ENCODE measurements at regions of chr14 and their contacts with region 1.

Region 1: GRCh38 chr14:102437997-102438915 is 71.3 kb downstream of the ANKRD9 start:
- DNase-seq: peak; percentile 79 to 88 (median 82)
- H3K4me3 ChIP-seq: peak overlapping the region in 3 of 7 experiments; percentile 19 to 66 (median 52)
- H3K27ac ChIP-seq: no peak overlapping the region
- H3K4me1 ChIP-seq: peaks cover 0 to 3% (median 1%) of the 10 kb centered on the region in 4 experiments
- H3K27me3 ChIP-seq: no peaks in the 10 kb centered on the region

Region 2: DNA sequence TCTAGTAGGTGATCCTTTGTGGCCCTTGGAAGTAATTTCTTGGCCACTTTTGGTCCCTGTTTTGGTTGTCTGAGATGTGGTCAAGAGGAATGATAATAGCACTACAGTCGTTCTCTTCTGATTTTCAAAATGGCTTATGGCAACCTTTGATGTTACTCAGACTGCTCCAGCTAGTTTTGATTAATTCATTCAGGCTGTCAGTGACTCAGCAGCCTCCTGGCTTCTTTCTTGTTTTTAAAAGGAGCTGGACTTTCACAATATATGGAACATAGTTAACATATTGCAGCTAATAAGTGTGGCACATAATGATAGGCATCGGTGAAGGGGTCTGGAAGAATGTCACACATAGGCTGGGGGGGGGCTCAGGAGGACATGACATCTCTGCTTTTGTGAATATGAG is 251.2 kb before region 1 on chr14:
- CTCF ChIA-PET with region 1: no interaction called
- POLR2A ChIA-PET with region 1: no interaction called
- DNase-seq: no peak
- H3K4me3 ChIP-seq: no peak overlapping the region
- H3K27ac ChIP-seq: no peak overlapping the region
- H3K4me1 ChIP-seq: peaks cover 0 to 9% (median 0%) of the 10 kb centered on the region in 4 experiments
- H3K27me3 ChIP-seq: no peaks in the 10 kb centered on the region

Region 3: GRCh38 chr14:102394717-102395375 is 43.4 kb before region 1 on chr14:
- CTCF ChIA-PET with region 1: no interaction called
- POLR2A ChIA-PET with region 1: no interaction called
- DNase-seq: no peak
- H3K4me3 ChIP-seq: no peak overlapping the region
- H3K27ac ChIP-seq: no peak overlapping the region
- H3K4me1 ChIP-seq: no peaks in the 10 kb centered on the region
- H3K27me3 ChIP-seq: no peaks in the 10 kb centered on the region

Region 4: DNA sequence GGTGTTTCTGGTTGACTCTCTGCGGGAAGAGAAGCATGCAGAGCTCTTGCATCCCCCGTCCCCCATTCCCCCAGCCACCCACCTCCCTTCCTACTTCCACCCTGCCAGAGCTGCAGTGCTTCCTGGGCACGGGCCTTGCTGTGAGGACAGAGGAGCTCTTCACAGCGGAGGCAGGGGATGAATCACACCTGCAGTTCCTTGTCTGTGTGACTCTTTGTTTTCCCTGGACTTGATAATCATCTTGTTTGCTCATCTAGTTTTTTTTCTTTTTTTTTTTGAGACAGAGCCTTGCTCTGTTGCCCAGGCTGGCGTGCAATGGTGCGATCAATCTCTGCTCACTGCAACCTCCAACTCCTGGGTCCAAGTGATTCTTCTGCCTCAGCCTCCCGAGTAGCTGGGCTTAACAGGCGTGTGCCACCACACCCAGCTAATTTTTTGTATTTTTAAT is 43.6 kb after region 1 on chr14:
- CTCF ChIA-PET with region 1: no interaction called
- POLR2A ChIA-PET with region 1: no interaction called
- DNase-seq: no peak
- H3K4me3 ChIP-seq: no peak overlapping the region
- H3K27ac ChIP-seq: no peak overlapping the region
- H3K4me1 ChIP-seq: peaks cover 0 to 4% (median 1%) of the 10 kb centered on the region in 4 experiments
- H3K27me3 ChIP-seq: no peaks in the 10 kb centered on the region

Region 5: DNA sequence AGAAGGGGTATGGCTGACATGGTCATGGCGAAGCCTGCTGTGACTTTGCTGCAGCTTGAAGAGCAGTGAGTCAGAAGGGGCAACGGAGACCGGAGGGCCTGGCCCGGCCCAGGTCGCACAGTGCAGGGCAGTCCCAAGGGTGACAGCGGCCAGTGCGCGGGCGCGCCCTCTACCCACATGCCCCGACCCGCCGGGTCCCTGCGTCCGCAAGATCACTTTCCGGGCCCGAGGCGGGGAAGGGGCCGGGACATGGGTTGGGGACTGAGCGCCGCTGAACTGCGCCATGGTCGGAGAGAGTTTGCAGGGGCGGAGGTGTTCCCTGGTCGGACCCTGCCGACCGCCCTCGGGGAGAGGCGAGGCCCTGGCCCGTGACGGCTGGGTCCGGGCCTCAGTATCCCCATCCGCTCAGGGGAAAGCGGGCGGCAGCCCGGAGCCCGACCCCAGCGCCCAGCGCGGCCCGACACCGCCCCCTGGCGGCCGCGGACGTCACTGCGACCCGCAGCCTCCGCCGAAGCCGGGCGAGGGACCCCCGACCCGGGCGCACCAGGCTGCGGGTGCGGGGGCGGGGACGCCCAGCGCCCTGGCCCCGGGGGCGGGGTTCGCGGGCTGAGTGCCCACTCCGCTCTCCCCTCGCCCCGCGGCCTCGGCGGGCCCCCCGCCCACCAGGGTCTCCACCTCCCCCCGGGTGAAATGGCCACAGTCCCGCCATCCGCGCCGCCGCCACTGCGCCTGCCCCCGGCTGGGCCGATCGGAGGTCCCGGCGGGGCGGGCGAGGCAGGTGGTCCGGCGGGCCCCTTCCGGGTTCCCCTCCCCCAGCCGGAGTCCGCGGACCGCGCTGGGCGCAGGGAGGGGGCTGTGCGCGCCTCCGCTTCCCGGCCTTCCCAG is 78.5 kb after region 1 on chr14:
- CTCF ChIA-PET with region 1: interaction called, 38 read pairs
- POLR2A ChIA-PET with region 1: interaction called, 3 read pairs
- DNase-seq: peak in 2 of 3 donors; percentile 54 to 57
- H3K4me3 ChIP-seq: peak overlapping the region; percentile 18 to 81 (median 68)
- H3K27ac ChIP-seq: no peak overlapping the region
- H3K4me1 ChIP-seq: peaks cover 0 to 9% (median 9%) of the 10 kb centered on the region in 4 experiments
- H3K27me3 ChIP-seq: peaks cover 0 to 11% (median 1%) of the 10 kb centered on the region in 5 experiments

Region 6: GRCh38 chr14:102554821-102555263 is 116.6 kb after region 1 on chr14:
- CTCF ChIA-PET with region 1: no interaction called
- POLR2A ChIA-PET with region 1: no interaction called
- DNase-seq: peak in 1 of 3 donors; percentile 38
- H3K4me3 ChIP-seq: peak overlapping the region in 5 of 7 experiments; percentile 60 to 82 (median 77)
- H3K27ac ChIP-seq: peak overlapping the region; percentile 77 to 79
- H3K4me1 ChIP-seq: peaks cover 0 to 11% (median 10%) of the 10 kb centered on the region in 4 experiments
- H3K27me3 ChIP-seq: no peaks in the 10 kb centered on the region